HepG2 (cell line): ENCODE measurements at regions of chr4 and their contacts with region 1.

Region 1: DNA sequence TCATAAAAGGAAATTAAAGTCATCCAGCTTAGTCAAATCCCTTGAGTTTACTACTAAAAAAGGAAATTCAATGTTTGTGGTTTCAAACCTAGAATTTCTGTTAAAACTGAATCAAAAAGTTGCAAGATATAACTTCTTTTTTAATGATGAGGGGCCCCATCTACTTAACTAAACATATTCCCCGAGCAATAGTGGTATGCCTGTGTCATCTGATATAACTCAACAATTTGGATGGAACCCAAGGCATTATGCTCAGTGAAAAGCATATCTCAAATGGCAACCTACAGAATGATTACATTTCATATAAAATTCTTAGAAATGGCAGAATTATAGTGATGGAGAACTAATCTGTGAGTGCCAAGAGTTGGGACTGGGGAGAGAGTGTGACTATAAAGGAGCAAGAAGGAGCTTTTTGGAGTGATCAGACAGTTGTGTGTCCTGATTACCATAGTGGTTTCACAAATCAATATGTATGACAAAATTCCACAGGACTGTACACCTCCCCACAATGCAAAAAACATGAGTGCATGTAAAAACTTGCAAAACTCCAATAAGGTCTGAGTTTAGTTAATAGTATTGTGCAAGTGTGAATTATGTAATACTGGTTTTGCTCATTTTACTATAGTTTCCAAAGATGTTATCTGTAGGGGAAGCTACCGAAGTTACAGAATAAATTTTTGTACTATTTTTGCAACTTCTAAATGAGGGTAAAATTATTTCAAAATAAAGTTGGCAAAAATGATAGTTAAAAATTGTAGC is 323.2 kb downstream of the ARHGAP24 start:
- DNase-seq: no peak
- ATAC-seq: no peak
- H3K4me3 ChIP-seq: no peak overlapping the region
- H3K27ac ChIP-seq: no peak overlapping the region
- H3K4me1 ChIP-seq: no peaks in the 10 kb centered on the region
- H3K27me3 ChIP-seq: no peaks in the 10 kb centered on the region
- CTCF ChIP-seq: no peak
- EP300 ChIP-seq: no peak
- POLR2A ChIP-seq: no peak
- RAD21 ChIP-seq: no peak

Region 2: GRCh38 chr4:85603437-85604336 is 194.5 kb before region 1 on chr4:
- CTCF ChIA-PET with region 1: no interaction called
- POLR2A ChIA-PET with region 1: no interaction called
- in situ Hi-C with region 1: no loop called
- intact Hi-C with region 1: no loop called
- DNase-seq: no peak
- ATAC-seq: no peak
- H3K4me3 ChIP-seq: no peak overlapping the region
- H3K27ac ChIP-seq: no peak overlapping the region
- H3K4me1 ChIP-seq: no peaks in the 10 kb centered on the region
- H3K27me3 ChIP-seq: no peaks in the 10 kb centered on the region
- CTCF ChIP-seq: no peak
- EP300 ChIP-seq: no peak
- POLR2A ChIP-seq: no peak
- RAD21 ChIP-seq: no peak

Region 3: GRCh38 chr4:86043755-86044592 is 245.8 kb after region 1 on chr4:
- CTCF ChIA-PET with region 1: no interaction called
- POLR2A ChIA-PET with region 1: no interaction called
- in situ Hi-C with region 1: no loop called
- intact Hi-C with region 1: loop called (anchors 1 kb)
- DNase-seq: peak; percentile 32
- ATAC-seq: peak; percentile 68
- H3K4me3 ChIP-seq: no peak overlapping the region
- H3K27ac ChIP-seq: no peak overlapping the region
- H3K4me1 ChIP-seq: no peaks in the 10 kb centered on the region
- H3K27me3 ChIP-seq: no peaks in the 10 kb centered on the region
- CTCF ChIP-seq: peak; percentile 62
- EP300 ChIP-seq: no peak
- POLR2A ChIP-seq: no peak
- RAD21 ChIP-seq: peak; percentile 21; the same call in 1 of the 2 replicates